Adrenal gland (tissue), 19 donors: ENCODE measurements at regions of chr13 and their contacts with region 1.

Region 1: DNA sequence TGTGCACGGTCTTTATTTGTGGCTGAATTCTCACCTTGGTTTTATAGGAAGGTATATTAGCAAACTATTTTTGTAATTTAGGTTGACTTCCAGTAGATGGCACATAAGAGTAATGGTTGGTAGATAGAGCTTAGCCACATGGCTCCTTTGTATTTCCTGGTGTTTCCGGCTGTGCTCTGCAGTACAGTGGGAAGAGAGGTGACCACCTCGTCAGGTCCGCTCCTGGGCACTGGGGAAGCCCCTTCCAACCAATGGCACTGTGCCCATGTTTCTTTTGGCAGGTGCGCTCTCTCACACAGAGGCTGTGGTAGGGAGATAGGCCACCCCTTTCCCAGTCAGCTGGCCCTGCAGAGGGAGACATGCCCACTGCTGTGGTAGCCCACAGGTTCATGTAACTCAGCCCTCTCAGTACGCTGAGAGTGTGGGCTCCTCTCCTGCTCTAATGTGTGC is 74.3 kb upstream of the ATP12A start:
- DNase-seq: no peak
- H3K4me3 ChIP-seq: no peak overlapping the region
- H3K27ac ChIP-seq: no peak overlapping the region
- H3K4me1 ChIP-seq: no peaks in the 10 kb centered on the region
- H3K27me3 ChIP-seq: no peaks in the 10 kb centered on the region
- CTCF ChIP-seq: peak in 3 of 6 experiments; percentile 24 to 60 (median 31)
- POLR2A ChIP-seq: no peak

Region 2: GRCh38 chr13:24386816-24387719 is 218.9 kb before region 1 on chr13:
- intact Hi-C with region 1: no loop called
- DNase-seq: no peak
- H3K4me3 ChIP-seq: no peak overlapping the region
- H3K27ac ChIP-seq: no peak overlapping the region
- H3K4me1 ChIP-seq: no peaks in the 10 kb centered on the region
- H3K27me3 ChIP-seq: no peaks in the 10 kb centered on the region
- CTCF ChIP-seq: no peak
- POLR2A ChIP-seq: no peak

Region 3: GRCh38 chr13:24671386-24672107 is 65.6 kb after region 1 on chr13:
- intact Hi-C with region 1: loop called in 1 of 2 experiments (anchors 2 kb)
- DNase-seq: peak; percentile 31 to 60 (median 36)
- H3K4me3 ChIP-seq: peak overlapping the region in 1 of 4 donors; percentile 6
- H3K27ac ChIP-seq: no peak overlapping the region
- H3K4me1 ChIP-seq: peaks cover 0 to 3% of the 10 kb centered on the region in 2 donors
- H3K27me3 ChIP-seq: no peaks in the 10 kb centered on the region
- CTCF ChIP-seq: peak; percentile 46 to 64 (median 58)
- POLR2A ChIP-seq: no peak

Region 4: DNA sequence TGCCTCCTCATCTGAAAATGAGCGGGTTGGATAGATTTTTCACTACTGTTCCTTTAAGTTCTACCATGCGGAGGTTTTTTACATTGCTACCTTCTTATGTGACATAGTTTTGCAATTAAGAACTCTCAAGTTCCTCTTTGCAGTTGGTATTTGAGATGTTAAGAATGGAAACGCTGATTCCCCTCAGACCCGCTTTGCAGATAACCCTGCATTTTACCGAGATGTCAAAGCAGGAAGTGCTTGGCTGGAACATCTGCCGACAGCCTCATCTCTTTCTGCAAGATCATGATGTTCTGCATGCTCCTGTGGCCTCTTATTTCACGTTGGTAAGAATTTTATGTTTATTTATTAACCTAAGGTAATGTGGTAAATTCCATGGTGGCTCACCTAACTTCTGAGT is 512.4 kb after region 1 on chr13:
- intact Hi-C with region 1: no loop called
- DNase-seq: no peak
- H3K4me3 ChIP-seq: no peak overlapping the region
- H3K27ac ChIP-seq: no peak overlapping the region
- H3K4me1 ChIP-seq: no peaks in the 10 kb centered on the region
- H3K27me3 ChIP-seq: no peaks in the 10 kb centered on the region
- CTCF ChIP-seq: no peak
- POLR2A ChIP-seq: no peak